ENCODE measurements at regions of chr14 and their contacts with region 1.

Region 1: DNA sequence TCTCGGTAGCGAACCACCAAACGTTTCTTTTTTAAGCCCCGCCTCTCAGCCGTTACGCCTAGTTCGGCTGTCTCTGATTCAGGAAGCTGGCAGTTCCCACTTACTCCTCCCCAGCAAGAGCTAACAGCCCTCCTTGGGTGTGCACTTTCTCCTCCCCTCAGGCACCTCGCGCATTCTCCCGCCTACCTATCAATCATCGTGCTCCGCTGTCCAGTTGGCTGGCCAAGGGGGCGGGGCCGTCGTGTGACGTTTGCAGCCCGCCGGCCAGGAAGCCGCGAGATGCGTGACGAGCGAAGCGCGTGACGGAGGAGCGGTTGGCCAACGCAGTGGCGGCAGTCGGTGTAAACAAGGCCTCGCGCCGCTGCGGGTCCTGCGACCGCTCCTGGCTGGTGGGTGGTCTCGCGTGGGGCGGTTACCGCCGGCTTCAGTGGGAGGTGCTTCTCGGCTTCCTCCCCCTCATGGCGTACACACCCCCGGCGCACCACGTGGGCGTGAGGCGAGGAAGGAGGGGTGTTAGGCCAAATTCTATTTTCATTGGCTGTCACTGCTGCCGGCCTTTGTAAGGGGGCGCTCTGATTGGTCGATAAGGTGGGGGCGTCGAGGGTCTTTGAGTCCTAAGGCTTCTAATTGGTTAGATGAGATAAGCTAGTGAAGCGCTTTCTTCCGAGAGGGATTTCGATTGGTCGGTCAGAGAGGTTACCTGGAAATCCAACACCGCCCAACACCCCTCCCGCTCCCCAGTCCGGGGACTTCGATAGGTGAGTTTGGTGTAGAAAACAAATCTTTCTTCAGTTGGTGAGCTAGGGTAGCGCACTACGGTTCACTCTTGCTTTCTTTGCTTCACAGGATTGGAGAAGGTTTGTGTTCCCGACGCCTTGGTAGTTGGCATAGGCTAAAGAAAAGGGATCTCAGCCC is at the starts of genes DCAF11 and NRL:
- DNase-seq: peak; percentile 98
- ATAC-seq: peak; percentile 86
- H3K4me3 Mint-ChIP-seq: peak within 1 kb of the TSS; percentile 99
- H3K27ac Mint-ChIP-seq: peak within 1 kb of the TSS; percentile 99
- H3K4me1 Mint-ChIP-seq: peaks cover 17% of the 10 kb centered on the region
- H3K27me3 Mint-ChIP-seq: peaks cover 4% of the 10 kb centered on the region; the same call in 1 of the 2 replicates
- CTCF ChIP-seq: no peak
- total RNA-seq, gene DCAF11: 73.6 to 90.2 TPM (median 77.3 TPM) in 3 replicates
- total RNA-seq, gene NRL: 1.3 to 2.3 TPM (median 1.6 TPM) in 3 replicates

Region 2: GRCh38 chr14:24051789-24052655 is 62.8 kb before region 1 on chr14 and contains the start of gene CARMIL3:
- CTCF ChIA-PET with region 1: interaction called, 254 read pairs
- POLR2A ChIA-PET with region 1: interaction called, 12 read pairs
- DNase-seq: peak; percentile 85
- ATAC-seq: peak; percentile 81
- H3K4me3 Mint-ChIP-seq: peak within 1 kb of the TSS; percentile 76
- H3K27ac Mint-ChIP-seq: peak within 1 kb of the TSS; percentile 58
- H3K4me1 Mint-ChIP-seq: peaks cover 18% of the 10 kb centered on the region
- H3K27me3 Mint-ChIP-seq: peaks cover 3% of the 10 kb centered on the region
- CTCF ChIP-seq: no peak
- total RNA-seq, gene CARMIL3: 10.6 to 13.0 TPM (median 11.4 TPM) in 3 replicates

Region 3: DNA sequence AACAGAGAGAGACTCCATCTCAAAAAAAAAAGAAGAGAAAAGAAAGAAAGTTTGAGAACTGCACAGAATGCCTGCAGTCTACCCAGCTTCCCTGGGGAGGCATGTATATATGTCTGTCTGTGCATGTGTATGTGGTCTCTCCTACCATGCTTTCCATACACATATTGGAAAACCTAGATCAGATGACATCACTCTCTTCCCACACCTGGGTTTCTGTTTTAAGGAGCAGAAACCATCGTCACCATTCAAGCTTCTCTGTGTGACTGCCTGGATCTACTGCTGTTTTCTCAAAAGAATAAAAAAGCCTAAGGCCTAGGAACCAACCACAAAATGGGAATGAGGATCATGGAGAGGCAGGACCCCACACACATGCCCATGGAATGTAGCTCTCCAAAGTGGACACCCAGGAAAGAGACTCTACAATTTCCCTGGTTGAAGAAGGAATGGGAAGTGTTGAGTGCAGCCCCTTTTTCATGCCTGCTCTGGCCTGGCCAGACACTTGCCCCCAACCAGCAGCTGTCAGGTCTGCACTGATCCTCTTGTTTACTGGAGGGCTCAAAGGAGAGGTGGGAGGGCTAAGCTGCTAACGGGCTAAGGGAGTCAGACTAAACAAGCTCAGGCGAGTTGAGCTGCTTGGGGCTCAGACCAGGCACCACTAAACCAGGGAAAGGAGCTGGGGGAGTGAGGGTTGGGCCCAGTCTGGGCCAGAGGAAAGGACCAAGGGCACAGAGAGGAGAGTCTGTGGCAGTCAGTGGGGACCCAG is 28.4 kb before region 1 on chr14:
- CTCF ChIA-PET with region 1: interaction called, 170 read pairs
- POLR2A ChIA-PET with region 1: interaction called, 6 read pairs
- DNase-seq: no peak
- ATAC-seq: no peak
- H3K4me3 Mint-ChIP-seq: no peak overlapping the region
- H3K27ac Mint-ChIP-seq: no peak overlapping the region
- H3K4me1 Mint-ChIP-seq: peaks cover 17% of the 10 kb centered on the region
- H3K27me3 Mint-ChIP-seq: peaks cover 24% of the 10 kb centered on the region
- CTCF ChIP-seq: no peak

Region 4: GRCh38 chr14:24135834-24136542 is 21.2 kb after region 1 on chr14 and contains the start of gene PSME1:
- CTCF ChIA-PET with region 1: interaction called, 26 read pairs
- POLR2A ChIA-PET with region 1: interaction called, 24 read pairs
- DNase-seq: peak; percentile 93
- ATAC-seq: peak; percentile 92
- H3K4me3 Mint-ChIP-seq: peak within 1 kb of the TSS; percentile 86
- H3K27ac Mint-ChIP-seq: peak within 1 kb of the TSS; percentile 88
- H3K4me1 Mint-ChIP-seq: peaks cover 33% of the 10 kb centered on the region
- H3K27me3 Mint-ChIP-seq: no peaks in the 10 kb centered on the region; the same call in 1 of the 2 replicates
- CTCF ChIP-seq: no peak
- total RNA-seq, gene PSME1: 76.8 to 99.1 TPM (median 98.8 TPM) in 3 replicates

Region 5: DNA sequence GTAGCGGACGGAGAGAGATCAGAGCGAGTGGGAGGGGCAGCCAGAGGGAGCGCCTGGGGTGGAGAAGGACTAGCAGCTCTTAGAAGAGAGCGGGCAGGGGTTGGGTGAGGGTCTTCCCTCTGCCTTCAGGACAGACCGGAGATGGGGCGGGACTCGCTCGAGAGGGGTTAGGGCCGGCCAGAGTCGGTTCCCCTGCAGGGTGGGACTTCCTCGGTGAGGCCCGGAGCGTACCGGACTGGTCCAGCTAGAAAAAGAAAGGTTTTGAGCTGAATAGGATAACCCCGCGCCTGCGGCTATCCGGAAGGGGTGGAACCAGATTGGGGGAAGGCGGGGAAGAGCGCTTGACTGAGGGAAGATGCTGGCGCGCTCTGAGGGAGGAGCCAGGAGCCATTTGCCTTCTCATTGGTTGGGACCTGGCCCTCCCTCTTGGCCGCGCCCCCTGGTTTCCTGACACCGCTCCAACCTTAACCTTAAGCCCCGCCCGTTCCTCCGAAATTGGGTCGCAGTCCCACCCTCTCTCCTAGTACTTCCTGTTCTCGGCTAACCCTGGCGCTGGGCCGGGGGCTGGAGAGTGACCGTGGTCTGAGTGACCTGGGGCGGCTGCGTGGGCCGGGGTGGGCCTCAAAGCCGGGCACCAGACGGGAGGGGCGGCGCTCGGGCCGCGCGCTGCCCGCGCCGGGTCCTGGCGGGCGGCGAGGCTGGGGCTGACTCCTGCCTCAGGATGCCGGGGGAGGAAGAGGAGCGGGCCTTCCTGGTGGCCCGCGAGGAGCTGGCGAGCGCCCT is 32.4 kb after region 1 on chr14 and contains the start of gene RNF31:
- CTCF ChIA-PET with region 1: interaction called, 26 read pairs
- POLR2A ChIA-PET with region 1: interaction called, 24 read pairs
- DNase-seq: peak; percentile 98
- ATAC-seq: peak; percentile 89
- H3K4me3 Mint-ChIP-seq: peak within 1 kb of the TSS; percentile 99
- H3K27ac Mint-ChIP-seq: peak within 1 kb of the TSS; percentile 98
- H3K4me1 Mint-ChIP-seq: peaks cover 21% of the 10 kb centered on the region
- H3K27me3 Mint-ChIP-seq: no peaks in the 10 kb centered on the region
- CTCF ChIP-seq: no peak
- total RNA-seq, gene RNF31: 63.0 to 86.2 TPM (median 68.4 TPM) in 3 replicates

Measured in WTC11 (cell line).